ENCODE measurements at regions of chr12 and their contacts with region 1.

Region 1: DNA sequence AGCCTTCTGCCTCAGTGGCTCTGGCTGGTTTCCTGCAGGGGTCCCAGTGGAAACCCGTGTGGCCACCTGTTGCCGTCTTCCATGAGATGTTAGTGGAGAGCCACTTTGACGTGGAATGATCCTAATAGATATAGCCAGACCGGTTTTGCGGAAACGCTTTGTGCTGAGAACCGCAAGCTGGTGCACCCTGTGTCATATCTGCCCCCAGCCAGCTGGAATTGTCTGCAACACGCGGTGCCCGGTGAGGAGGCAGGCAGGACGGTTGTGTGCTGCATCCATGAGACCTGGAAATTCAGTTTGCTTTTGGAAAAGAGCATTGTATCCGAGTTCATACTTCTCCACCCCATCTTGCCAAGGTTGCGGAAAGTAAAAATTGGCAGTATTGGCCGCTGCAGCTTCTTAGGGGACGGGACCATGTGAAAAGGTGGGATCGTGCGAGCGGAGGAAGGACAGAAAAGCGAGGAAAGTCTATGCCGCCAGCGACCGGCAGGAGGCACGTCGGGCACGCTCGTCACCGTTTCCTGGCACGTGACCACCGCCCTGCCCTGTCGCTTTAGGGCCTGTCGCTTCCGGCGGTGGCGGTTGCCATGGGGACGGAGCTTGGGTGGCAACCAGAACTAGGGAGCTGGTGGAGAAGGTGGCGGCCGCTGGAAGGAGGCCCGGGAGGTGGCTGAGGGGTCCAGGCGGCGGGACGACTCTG is at the start of gene CFAP251:
- DNase-seq: peak; percentile 77 to 99 (median 95)

Region 2: GRCh38 chr12:122021822-122022526 is 103.8 kb after region 1 on chr12 and contains the start of gene BCL7A:
- intact Hi-C with region 1: loop called (anchors 2 kb)
- DNase-seq: peak; percentile 63 to 97 (median 72)

Region 3: DNA sequence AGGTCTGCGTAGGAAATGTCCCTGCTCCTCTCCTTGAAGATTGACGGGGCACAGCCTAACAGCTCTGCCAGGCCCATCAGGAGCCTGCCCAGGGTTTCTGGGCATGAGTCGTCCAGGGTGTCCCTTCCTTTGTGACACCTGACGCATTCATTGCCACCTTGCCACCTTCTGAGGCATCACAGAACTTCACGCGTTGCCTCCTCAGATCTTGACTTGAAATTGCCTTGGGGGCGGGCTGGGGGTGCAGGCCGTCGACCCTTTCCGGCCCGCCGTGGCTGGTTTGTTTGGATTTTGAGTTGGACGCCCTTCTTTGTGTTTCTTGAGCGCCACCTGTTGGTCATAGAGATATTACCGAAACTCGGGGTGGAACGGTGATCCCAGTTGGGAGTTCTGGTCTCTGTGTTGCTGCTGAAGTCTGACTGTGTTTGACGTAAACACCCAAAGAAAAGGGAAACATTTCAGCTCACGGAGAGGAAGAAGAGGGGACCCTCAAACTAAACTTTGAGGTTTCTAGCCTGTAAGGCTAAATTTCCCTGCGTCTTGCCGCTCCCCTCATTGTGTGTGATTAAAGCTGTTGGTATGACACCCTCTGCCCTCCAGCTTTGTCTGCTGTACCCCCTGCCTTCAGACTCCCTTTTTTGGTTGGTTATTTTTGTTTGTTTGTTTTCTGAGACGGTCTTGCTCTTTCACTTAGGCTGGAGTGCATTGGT is 205.1 kb after region 1 on chr12:
- intact Hi-C with region 1: loop called (anchors 5 kb)
- DNase-seq: peak in 8 of 10 donors; percentile 57 to 91 (median 77)